A673 (cell line): ENCODE measurements at regions of chr1 and their contacts with region 1.

Region 1: DNA sequence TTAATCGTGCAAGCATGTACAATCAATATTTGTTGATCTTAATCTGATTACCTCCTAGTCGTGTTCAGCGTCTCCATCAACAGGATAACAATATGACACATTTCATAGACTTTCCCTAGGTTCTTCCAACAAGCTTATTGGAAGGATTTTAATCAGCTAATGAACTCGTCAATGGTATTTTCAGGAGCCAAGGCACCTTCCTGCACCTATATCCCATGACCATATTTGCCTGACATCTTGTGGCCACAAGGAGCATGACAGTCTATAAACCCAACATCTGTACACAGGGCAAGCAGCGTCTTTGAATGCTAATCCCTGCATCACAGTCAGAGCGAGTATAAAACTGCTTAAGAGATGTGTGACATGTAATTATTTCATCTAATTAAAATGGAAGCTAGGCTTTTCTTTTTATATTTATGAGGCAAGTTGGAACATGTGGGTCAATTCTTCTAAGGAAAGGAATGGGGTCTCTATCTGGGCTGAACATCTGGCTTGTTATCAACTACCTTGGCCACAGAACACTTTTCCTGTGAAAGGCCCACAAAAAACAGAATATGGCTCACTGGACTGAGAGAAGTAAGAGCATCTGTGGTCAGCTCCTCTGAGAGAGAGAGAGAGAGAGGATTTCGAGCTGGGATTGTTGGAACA is 388.8 kb downstream of the NTNG1 start:
- DNase-seq: peak; percentile 87
- H3K4me3 ChIP-seq: no peak overlapping the region
- H3K27ac ChIP-seq: no peak overlapping the region
- H3K4me1 ChIP-seq: peaks cover 17% of the 10 kb centered on the region
- H3K27me3 ChIP-seq: no peaks in the 10 kb centered on the region
- CTCF ChIP-seq: peak; percentile 93

Region 2: DNA sequence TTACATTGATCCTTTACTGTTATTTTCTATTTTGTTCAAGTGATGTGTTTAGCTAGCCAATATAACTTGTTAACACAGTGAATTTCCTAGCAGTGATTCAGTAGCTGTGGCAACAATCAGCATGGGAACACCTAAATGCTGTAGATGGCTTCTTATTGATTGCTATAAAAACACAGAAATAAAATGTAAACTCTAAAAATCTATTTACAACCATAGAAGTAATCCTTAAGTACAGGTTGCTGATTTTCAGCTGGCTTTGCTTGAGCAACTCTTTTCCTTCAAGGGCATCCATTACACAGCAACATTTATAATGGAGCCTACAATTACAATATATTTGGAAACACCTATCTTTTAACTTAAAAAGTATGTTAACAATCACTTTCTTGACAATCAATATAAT is 1146.9 kb before region 1 on chr1:
- CTCF ChIA-PET with region 1: no interaction called
- POLR2A ChIA-PET with region 1: no interaction called
- intact Hi-C with region 1: loop called (anchors 10 kb)
- DNase-seq: no peak
- H3K4me3 ChIP-seq: no peak overlapping the region
- H3K27ac ChIP-seq: no peak overlapping the region
- H3K4me1 ChIP-seq: no peaks in the 10 kb centered on the region
- H3K27me3 ChIP-seq: no peaks in the 10 kb centered on the region
- CTCF ChIP-seq: no peak

Region 3: DNA sequence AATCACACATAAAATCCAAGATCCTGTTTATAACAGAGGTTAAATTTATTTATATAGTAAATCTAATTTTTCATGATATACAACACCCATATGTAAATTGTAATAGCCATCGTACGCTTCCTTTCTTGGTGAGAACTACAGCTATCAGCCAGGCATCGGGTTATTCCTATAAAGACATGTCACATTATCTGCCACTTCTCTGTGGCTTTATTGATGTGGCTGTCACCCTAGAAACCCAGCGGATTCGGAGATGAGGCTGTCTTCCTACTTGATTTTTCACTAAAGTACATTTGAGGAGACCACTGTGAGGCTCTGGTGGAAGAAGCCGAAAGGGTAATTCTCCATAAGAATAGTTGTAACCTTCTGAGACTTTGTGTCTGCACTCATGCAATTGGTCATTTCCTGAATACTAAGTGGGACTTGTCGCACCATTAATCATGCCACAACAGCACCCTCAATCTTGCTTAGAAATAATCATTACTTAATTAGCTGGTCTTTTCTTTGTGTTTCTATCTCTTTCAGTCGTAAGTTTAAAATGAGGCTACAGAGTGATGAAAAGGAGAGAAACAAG is 282.8 kb before region 1 on chr1:
- CTCF ChIA-PET with region 1: no interaction called
- POLR2A ChIA-PET with region 1: no interaction called
- intact Hi-C with region 1: no loop called
- DNase-seq: peak; percentile 93
- H3K4me3 ChIP-seq: no peak overlapping the region
- H3K27ac ChIP-seq: peak overlapping the region; percentile 63
- H3K4me1 ChIP-seq: peaks cover 90% of the 10 kb centered on the region
- H3K27me3 ChIP-seq: no peaks in the 10 kb centered on the region
- CTCF ChIP-seq: no peak

Region 4: GRCh38 chr1:107277022-107277421 is 252.6 kb before region 1 on chr1:
- CTCF ChIA-PET with region 1: interaction called, 10 read pairs
- POLR2A ChIA-PET with region 1: no interaction called
- intact Hi-C with region 1: no loop called
- DNase-seq: peak; percentile 90
- H3K4me3 ChIP-seq: no peak overlapping the region
- H3K27ac ChIP-seq: peak overlapping the region; percentile 39
- H3K4me1 ChIP-seq: peaks cover 71% of the 10 kb centered on the region
- H3K27me3 ChIP-seq: no peaks in the 10 kb centered on the region
- CTCF ChIP-seq: peak; percentile 72

Region 5: GRCh38 chr1:107430540-107431228 is 98.9 kb before region 1 on chr1:
- CTCF ChIA-PET with region 1: interaction called, 7 read pairs
- POLR2A ChIA-PET with region 1: no interaction called
- intact Hi-C with region 1: loop called (anchors 5 kb)
- DNase-seq: peak; percentile 65
- H3K4me3 ChIP-seq: no peak overlapping the region
- H3K27ac ChIP-seq: no peak overlapping the region
- H3K4me1 ChIP-seq: peaks cover 25% of the 10 kb centered on the region
- H3K27me3 ChIP-seq: no peaks in the 10 kb centered on the region
- CTCF ChIP-seq: peak; percentile 85

Region 6: DNA sequence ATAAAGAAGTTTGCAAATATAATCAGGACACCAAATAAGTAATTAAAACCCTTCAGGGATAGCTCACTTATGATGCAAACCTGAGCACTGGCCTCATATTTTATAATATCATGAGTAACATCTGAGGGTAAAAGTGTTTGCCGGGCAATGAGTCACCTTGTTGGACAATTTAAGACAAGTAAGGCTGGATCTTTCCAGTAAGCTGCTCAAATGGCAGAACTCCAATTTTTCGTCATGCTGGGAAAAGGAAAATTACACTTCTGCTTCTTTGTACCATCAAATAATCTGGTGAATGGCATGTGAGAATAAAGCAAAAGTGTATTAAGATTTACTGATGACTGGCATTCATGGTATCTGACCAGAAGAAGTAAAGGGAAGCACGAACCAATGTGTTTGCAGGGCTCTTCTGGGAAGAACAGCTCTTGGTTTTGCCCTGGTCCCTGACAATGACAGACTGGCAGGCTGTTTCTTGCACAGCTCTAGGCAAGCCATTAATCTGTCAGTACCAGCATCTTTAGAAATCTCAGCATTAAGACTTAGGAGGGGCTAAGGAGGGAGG is 43.1 kb after region 1 on chr1:
- CTCF ChIA-PET with region 1: no interaction called
- POLR2A ChIA-PET with region 1: no interaction called
- intact Hi-C with region 1: no loop called
- DNase-seq: peak; percentile 50
- H3K4me3 ChIP-seq: no peak overlapping the region
- H3K27ac ChIP-seq: no peak overlapping the region
- H3K4me1 ChIP-seq: no peaks in the 10 kb centered on the region
- H3K27me3 ChIP-seq: no peaks in the 10 kb centered on the region
- CTCF ChIP-seq: no peak

Region 7: DNA sequence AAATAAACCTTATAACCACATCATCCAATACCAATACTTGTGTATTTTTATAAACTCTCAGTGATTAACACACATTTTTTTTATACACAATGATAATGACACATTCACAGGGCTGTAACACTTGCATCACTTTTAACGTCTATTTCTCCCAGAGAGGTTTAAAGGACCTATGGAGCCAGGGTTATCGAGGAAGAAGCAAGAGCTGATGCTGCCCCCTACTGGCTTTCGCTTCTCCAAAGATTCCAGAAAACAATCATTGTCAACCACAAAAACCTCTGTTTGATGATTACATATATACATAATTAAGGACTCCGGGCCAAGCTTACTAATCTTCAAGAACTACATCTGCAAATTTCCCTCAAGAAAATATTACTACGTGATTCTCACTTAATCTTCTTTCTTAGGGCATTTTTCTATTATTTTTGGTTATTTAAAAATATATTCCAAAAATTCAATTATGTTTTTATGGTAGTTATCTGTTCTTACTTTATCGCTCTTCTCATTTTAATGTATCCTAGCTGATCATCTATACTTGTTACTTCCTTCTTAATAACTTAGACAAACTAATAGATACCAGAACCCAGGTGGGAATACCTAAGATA is 220.8 kb after region 1 on chr1:
- CTCF ChIA-PET with region 1: interaction called, 3 read pairs
- POLR2A ChIA-PET with region 1: no interaction called
- intact Hi-C with region 1: loop called (anchors 5 kb)
- DNase-seq: peak; percentile 90
- H3K4me3 ChIP-seq: no peak overlapping the region
- H3K27ac ChIP-seq: no peak overlapping the region
- H3K4me1 ChIP-seq: peaks cover 25% of the 10 kb centered on the region
- H3K27me3 ChIP-seq: no peaks in the 10 kb centered on the region
- CTCF ChIP-seq: peak; percentile 86